ENCODE measurements at regions of chr15 and their contacts with region 1.

Region 1: DNA sequence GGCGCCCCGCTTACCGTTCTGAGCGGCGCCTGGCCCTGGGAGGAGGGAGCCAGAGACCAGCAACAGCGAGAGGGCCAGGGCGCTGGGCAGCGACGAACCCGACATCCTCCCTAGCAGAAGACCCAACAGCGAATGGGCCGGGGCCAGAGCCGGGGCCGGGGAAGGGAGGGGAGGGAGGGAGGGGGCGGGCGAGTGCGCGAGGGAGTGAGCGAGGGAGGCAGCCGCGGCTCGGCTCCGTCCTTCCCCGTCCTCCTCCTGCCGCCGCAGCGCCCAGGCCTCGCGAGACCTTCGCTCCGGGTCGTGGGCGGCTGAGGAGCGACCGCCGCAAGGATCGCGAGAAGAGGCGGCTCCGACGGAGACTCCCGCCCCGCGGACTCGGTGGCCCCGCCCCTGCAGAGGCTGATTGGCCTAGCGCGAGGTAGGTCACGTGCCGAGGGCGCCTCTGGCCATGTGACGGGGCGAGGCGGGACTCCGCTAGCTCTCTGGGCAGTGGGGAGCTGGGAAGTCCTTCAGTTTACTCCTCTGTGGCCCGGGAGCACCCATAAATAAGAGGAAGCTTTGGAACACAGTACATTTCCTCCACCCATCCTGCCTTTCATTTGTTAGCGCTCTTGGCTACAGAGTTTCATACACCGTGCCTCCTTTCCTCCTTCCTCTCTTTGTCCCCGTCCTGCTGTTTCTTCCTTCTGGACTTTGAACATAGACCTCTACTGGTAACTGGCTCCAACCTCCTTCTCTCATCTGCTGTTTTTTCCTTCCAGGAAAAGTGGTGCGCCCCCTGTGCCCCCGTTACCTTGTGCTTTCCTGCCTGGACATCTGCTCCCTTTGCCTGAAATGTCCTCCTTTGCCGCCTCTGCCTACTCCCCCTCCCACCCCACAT is at the start of gene NPTN:
- DNase-seq: peak; percentile 84 to 99
- H3K4me3 ChIP-seq: peak within 1 kb of the TSS; percentile 82
- H3K27ac ChIP-seq: peak within 1 kb of the TSS; percentile 96
- H3K4me1 ChIP-seq: peaks cover 55% of the 10 kb centered on the region
- H3K27me3 ChIP-seq: no peaks in the 10 kb centered on the region
- CTCF ChIP-seq: no peak
- total RNA-seq, gene NPTN: 61.8 and 101 TPM in 2 replicates

Region 2: GRCh38 chr15:72783563-72784237 is 849.7 kb before region 1 on chr15 and contains the start of gene ADPGK:
- CTCF ChIA-PET with region 1: no interaction called
- POLR2A ChIA-PET with region 1: no interaction called
- intact Hi-C with region 1: loop called (anchors 5 kb)
- DNase-seq: peak; percentile 75 to 94
- H3K4me3 ChIP-seq: peak within 1 kb of the TSS; percentile 64
- H3K27ac ChIP-seq: peak within 1 kb of the TSS; percentile 55
- H3K4me1 ChIP-seq: peaks cover 21% of the 10 kb centered on the region
- H3K27me3 ChIP-seq: peaks cover 8% of the 10 kb centered on the region; the same call in 1 of the 2 replicates
- CTCF ChIP-seq: no peak
- total RNA-seq, gene ADPGK: 40.3 and 48.6 TPM in 2 replicates

Region 3: GRCh38 chr15:73346735-73347312 is 286.5 kb before region 1 on chr15:
- CTCF ChIA-PET with region 1: no interaction called
- POLR2A ChIA-PET with region 1: no interaction called
- intact Hi-C with region 1: no loop called
- DNase-seq: peak; percentile 48 to 61
- H3K4me3 ChIP-seq: no peak overlapping the region
- H3K27ac ChIP-seq: no peak overlapping the region
- H3K4me1 ChIP-seq: no peaks in the 10 kb centered on the region
- H3K27me3 ChIP-seq: peaks cover 59% of the 10 kb centered on the region
- CTCF ChIP-seq: no peak

Region 4: DNA sequence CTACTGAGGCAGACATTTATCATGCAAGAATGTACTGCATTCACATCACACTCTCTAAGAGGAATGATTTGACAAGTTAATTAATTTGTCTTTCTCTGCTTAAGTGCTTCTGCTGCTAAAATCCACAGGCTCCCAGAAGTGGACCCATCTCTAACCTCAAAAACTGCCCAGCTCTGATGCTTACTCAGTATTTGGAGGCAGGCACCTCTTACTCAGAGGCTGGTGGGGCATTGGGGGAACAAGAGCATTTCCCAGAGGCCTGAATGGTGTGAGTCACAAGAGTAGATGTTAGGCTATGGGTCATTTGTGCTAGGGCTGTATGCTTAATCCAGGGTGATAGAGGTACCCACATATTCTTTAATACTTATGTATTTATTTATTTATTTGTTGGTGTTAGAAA is 230.2 kb before region 1 on chr15:
- CTCF ChIA-PET with region 1: no interaction called
- POLR2A ChIA-PET with region 1: interaction called, 11 read pairs
- intact Hi-C with region 1: no loop called
- DNase-seq: no peak
- H3K4me3 ChIP-seq: no peak overlapping the region
- H3K27ac ChIP-seq: no peak overlapping the region
- H3K4me1 ChIP-seq: no peaks in the 10 kb centered on the region
- H3K27me3 ChIP-seq: no peaks in the 10 kb centered on the region
- CTCF ChIP-seq: no peak

Region 5: DNA sequence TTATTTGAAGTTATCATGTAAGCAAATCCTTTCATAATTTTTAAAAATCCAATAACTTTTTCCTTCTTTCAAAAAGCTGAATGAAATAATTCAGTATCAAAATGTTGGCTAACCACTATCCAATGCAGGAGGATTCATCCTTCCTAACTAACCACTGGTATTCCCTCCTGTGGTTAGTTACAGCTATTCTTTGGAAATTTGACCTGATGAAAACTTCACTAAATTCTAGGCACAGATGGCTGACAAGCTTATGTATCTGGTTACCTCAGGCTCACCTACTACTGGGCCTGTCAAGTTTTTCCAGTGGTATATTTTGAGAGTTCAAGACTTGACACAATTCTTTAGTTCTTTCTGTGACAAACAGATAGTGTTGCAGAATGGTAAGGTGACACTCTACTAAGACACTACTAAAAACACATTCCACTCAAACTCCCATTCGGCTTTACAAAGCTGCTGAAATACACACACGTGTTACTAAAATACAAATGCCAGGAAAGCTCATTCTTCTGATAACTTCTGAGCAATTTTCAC is 16.0 kb before region 1 on chr15:
- CTCF ChIA-PET with region 1: interaction called, 3 read pairs
- POLR2A ChIA-PET with region 1: interaction called, 11 read pairs
- intact Hi-C with region 1: no loop called
- DNase-seq: no peak
- H3K4me3 ChIP-seq: no peak overlapping the region
- H3K27ac ChIP-seq: no peak overlapping the region
- H3K4me1 ChIP-seq: no peaks in the 10 kb centered on the region
- H3K27me3 ChIP-seq: no peaks in the 10 kb centered on the region
- CTCF ChIP-seq: no peak

Region 6: GRCh38 chr15:73704869-73705645 is 71.7 kb after region 1 on chr15:
- CTCF ChIA-PET with region 1: interaction called, 36 read pairs
- POLR2A ChIA-PET with region 1: no interaction called
- intact Hi-C with region 1: loop called (anchors 1 kb)
- DNase-seq: peak in 1 of 2 experiments; percentile 53
- H3K4me3 ChIP-seq: no peak overlapping the region
- H3K27ac ChIP-seq: no peak overlapping the region
- H3K4me1 ChIP-seq: no peaks in the 10 kb centered on the region
- H3K27me3 ChIP-seq: no peaks in the 10 kb centered on the region
- CTCF ChIP-seq: peak; percentile 81

Region 7: DNA sequence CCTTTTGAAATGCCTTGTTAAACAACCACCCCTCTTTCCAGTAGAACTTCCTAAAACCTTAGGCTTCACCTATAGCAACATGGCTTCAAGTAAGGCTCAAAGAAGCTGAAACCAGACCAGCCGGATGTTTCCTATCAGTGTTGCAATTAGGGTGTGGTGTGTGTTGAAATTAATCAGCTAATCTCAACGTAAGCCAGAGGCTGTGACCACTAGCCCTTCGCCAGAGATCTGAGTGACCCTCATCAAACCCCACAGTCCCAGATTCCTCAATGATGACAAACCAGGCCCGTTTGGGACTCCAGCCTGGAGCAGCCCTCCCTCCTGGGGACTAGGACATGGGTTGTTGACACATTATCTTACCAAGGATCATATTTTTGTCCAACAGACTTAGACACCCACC is 706.8 kb after region 1 on chr15:
- CTCF ChIA-PET with region 1: no interaction called
- POLR2A ChIA-PET with region 1: no interaction called
- intact Hi-C with region 1: loop called (anchors 10 kb)
- DNase-seq: peak; percentile 82 to 98
- H3K4me3 ChIP-seq: no peak overlapping the region; the same call in 1 of the 2 replicates
- H3K27ac ChIP-seq: peak overlapping the region; percentile 85
- H3K4me1 ChIP-seq: peaks cover 60% of the 10 kb centered on the region
- H3K27me3 ChIP-seq: no peaks in the 10 kb centered on the region
- CTCF ChIP-seq: no peak